ENCODE measurements at regions of chr11 and their contacts with region 1.

Region 1: DNA sequence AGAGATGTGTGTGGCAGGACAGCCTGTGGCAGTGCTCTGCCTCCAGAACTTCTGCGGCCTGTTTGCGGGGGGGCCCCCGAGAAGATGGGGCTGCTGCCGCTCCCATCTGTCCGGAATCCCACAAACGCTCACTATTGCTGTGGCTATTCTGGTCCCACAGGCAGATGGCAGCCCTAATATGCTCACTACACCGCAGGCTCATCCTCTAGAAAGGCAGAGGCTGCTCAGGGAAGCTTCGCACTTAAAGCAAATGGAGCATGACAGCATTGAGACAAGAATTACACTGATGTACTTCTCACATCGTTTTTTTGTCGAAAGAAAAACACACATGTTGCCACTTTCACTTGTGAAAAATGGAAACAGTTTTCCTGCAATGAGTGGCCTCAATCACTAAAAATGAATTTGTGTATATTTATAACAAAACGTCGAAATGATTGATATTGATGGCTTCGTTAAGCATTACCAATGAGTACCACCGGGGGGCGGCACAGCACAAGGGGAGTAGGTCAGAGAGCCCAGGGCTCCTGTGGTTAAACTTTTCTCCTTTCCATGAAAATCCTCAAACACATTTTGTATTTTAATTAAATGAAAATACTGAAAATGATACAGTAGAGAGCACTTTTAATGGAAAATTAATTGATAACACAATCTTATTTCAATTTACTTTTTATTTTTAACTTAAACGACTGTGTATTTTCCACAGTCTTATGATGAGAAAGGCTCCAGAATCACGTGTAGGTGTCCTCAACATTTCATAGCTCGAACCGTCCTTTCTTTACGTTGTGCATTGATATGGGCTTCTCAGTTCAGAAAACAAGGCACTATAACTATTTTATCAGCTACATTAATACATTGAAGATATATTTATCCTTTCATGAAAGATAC is 69.1 kb downstream of the CTTN start:
- DNase-seq: peak; percentile 51
- H3K4me3 ChIP-seq: no peak overlapping the region
- H3K27ac ChIP-seq: no peak overlapping the region
- H3K4me1 ChIP-seq: no peaks in the 10 kb centered on the region
- H3K27me3 ChIP-seq: no peaks in the 10 kb centered on the region
- CTCF ChIP-seq: peak; percentile 70 to 87
- POLR2A ChIP-seq: no peak

Region 2: GRCh38 chr11:70281156-70281609 is 186.3 kb before region 1 on chr11:
- CTCF ChIA-PET with region 1: no interaction called
- POLR2A ChIA-PET with region 1: no interaction called
- dilution Hi-C with region 1: no loop called
- intact Hi-C with region 1: no loop called
- DNase-seq: peak; percentile 67
- H3K4me3 ChIP-seq: no peak overlapping the region
- H3K27ac ChIP-seq: peak overlapping the region; percentile 45
- H3K4me1 ChIP-seq: peaks cover 14% of the 10 kb centered on the region
- H3K27me3 ChIP-seq: no peaks in the 10 kb centered on the region
- CTCF ChIP-seq: no peak
- POLR2A ChIP-seq: no peak

Region 3: GRCh38 chr11:71251761-71252443 is 784.5 kb after region 1 on chr11:
- CTCF ChIA-PET with region 1: no interaction called
- POLR2A ChIA-PET with region 1: no interaction called
- dilution Hi-C with region 1: no loop called
- intact Hi-C with region 1: loop called (anchors 5 kb)
- DNase-seq: no peak
- H3K4me3 ChIP-seq: no peak overlapping the region
- H3K27ac ChIP-seq: no peak overlapping the region
- H3K4me1 ChIP-seq: no peaks in the 10 kb centered on the region
- H3K27me3 ChIP-seq: peaks cover 10 to 34% of the 10 kb centered on the region in 2 experiments
- CTCF ChIP-seq: peak in 1 of 2 donors; percentile 9
- POLR2A ChIP-seq: no peak

Region 4: GRCh38 chr11:71420455-71421241 is 953.2 kb after region 1 on chr11:
- CTCF ChIA-PET with region 1: interaction called, 4 read pairs
- POLR2A ChIA-PET with region 1: no interaction called
- dilution Hi-C with region 1: no loop called
- intact Hi-C with region 1: loop called (anchors 2 kb)
- DNase-seq: peak; percentile 32
- H3K4me3 ChIP-seq: no peak overlapping the region
- H3K27ac ChIP-seq: no peak overlapping the region
- H3K4me1 ChIP-seq: no peaks in the 10 kb centered on the region
- H3K27me3 ChIP-seq: peaks cover 0 to 2% of the 10 kb centered on the region in 2 experiments
- CTCF ChIP-seq: peak; percentile 57 to 58
- POLR2A ChIP-seq: no peak